GM10248 (cell line): ENCODE measurements at regions of chr11 and their contacts with region 1.

Region 1: GRCh38 chr11:123478352-123478987 is 48.4 kb downstream of the GRAMD1B start:
- DNase-seq: peak; percentile 53
- CTCF ChIP-seq: peak; percentile 42

Region 2: DNA sequence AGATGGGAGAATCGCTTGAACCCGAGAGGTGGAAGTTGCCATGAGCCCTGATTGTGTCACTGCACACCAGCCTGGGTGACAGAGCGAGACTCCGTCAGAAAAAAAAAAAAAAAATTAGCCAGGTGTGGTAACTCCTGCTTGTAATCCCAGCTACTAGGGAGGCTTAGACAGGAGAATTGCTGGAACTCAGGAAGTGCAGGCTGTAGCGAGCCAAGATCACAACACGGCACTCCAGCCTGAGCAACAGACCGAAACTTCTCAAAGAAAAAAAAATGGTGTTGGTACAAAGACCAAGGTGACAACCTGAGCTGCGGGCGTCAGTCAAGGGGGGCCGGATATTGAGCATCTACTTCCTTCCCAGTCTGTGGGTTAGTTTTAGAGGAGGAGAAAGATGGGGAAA is 368.1 kb before region 1 on chr11:
- CTCF ChIA-PET with region 1: interaction called, 14 read pairs
- POLR2A ChIA-PET with region 1: no interaction called
- DNase-seq: no peak
- CTCF ChIP-seq: no peak

Region 3: GRCh38 chr11:123301696-123302400 is 176.6 kb before region 1 on chr11:
- CTCF ChIA-PET with region 1: interaction called, 79 read pairs
- POLR2A ChIA-PET with region 1: no interaction called
- DNase-seq: peak; percentile 89
- CTCF ChIP-seq: peak; percentile 90

Region 4: GRCh38 chr11:123429913-123430720 is 48.4 kb before region 1 on chr11 and contains the start of gene GRAMD1B:
- CTCF ChIA-PET with region 1: interaction called, 16 read pairs
- POLR2A ChIA-PET with region 1: no interaction called
- DNase-seq: peak; percentile 78
- CTCF ChIP-seq: peak; percentile 22

Region 5: GRCh38 chr11:123494195-123495050 is 16.0 kb after region 1 on chr11:
- CTCF ChIA-PET with region 1: interaction called, 20 read pairs
- POLR2A ChIA-PET with region 1: no interaction called
- DNase-seq: no peak
- CTCF ChIP-seq: no peak